ENCODE measurements at regions of chr5 and their contacts with region 1.

Region 1: GRCh38 chr5:170434966-170435605 is 45.9 kb upstream of the KCNMB1 start:
- DNase-seq: peak; percentile 78
- H3K27ac ChIP-seq: no peak overlapping the region
- CTCF ChIP-seq: peak; percentile 99

Region 2: DNA sequence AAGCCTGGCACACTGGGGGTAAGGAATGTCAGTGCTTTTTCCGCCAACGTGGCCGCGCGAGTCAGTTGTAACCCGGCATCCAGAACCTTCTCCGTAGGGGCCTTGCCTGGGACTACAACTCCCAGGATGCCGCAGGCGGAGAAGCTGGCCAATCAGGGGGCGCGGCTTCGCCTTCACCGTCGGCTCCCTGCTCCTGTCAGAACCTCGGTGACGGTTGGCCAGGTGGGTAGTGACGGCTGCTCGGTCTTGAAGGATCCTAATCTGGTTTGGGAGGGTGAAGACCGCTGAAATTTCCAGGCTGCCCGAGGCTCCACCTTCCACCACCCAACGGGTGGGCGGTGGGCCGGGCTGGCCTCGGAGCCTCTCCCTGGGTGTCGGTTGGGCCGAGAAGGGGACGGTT is 202.3 kb before region 1 on chr5 and contains the start of gene C5orf58:
- CTCF ChIA-PET with region 1: no interaction called
- POLR2A ChIA-PET with region 1: no interaction called
- DNase-seq: no peak
- H3K27ac ChIP-seq: no peak within 1 kb of the TSS
- CTCF ChIP-seq: no peak

Region 3: DNA sequence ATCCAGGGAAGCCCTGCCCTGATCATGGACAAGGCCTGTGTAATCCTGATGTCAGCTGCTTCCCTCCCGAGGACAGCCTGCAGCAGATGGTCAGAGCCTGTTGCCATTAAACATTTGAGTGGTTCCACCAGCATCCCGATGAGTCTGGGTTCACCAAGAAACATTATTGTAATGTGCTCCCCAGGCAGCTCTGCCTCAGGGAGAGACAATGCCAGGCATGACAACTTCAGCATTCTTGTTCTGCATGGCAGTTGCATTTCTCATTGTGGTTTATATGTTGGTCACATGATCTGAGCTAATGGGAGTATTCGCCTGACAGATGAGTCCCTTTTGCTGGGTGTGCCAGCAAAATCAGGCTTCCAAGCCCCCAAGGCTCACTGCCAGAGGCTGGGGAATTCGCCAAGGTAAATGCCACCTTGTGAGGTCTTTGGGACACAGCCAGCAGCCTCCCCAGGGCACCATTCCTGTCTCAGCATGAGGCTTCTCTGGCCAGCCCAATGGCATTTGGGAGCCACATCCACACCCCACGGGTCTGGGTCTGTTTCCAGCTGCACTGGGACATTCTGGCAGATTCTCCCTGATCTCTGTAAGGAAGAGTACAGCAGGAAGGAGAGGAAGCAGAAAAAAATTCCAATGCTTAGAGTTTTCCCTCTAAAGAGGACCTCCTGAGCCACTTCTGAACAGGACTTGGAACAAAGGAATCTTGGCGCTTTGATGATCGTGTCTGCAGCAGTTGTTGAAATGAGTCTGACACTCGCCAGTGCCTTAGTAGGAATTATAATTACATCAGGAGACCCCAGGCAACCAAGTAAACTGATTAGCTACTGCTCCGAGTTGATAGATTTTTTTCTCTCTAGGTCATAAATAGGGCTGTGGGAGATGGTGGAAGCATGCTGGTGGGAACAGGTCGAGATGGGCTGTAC is 87.4 kb after region 1 on chr5:
- CTCF ChIA-PET with region 1: no interaction called
- POLR2A ChIA-PET with region 1: no interaction called
- DNase-seq: peak; percentile 76
- H3K27ac ChIP-seq: peak overlapping the region; percentile 96
- CTCF ChIP-seq: no peak

Region 4: GRCh38 chr5:170623576-170624181 is 188.6 kb after region 1 on chr5:
- CTCF ChIA-PET with region 1: interaction called, 62 read pairs
- POLR2A ChIA-PET with region 1: no interaction called
- DNase-seq: peak; percentile 45
- H3K27ac ChIP-seq: no peak overlapping the region
- CTCF ChIP-seq: no peak; the same call in 1 of the 2 replicates

Region 5: DNA sequence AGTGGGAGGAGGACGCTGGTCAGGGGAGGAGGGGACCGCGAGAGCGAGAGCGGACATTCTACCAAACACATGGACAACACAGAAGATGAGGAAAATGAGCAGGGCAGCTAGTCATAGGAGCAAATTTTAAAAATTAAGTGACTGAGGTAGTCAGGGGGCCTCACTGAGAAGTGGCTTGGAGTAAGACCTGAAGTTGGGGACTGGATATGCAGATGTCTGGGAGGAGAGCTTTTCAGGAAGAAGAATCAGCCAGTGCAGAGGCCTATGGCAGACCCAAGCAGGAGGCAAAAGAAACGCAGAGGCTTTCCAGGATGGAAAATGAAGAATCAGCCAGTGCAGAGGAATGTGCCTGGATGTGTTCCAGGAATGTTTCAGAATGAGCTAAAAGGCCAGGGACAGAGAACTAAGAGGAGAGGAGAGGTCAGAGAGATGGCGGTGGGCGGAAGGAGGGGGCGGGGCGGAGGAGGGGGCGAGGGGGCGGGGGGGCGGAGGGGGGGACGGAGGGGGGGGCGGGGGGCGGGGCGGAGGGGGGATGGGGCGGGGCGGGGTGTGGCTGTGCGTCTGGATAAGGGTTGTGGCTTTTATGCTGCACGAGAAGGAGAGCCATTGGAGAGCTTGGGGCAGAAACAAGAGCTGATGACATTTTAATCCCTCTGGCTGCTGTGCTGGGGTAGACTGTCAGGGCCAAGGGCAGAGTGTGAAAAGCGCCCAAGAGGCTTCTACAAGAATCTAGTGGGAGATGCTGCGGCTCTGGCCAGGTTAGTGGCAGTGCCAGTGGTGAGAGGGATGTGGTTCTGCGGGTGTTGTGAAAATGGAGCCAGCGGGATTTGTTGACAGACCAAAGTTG is 198.4 kb after region 1 on chr5:
- CTCF ChIA-PET with region 1: interaction called, 92 read pairs
- POLR2A ChIA-PET with region 1: no interaction called
- DNase-seq: peak; percentile 69
- H3K27ac ChIP-seq: peak overlapping the region; percentile 72
- CTCF ChIP-seq: peak; percentile 3

Region 6: GRCh38 chr5:170638454-170639220 is 203.6 kb after region 1 on chr5:
- CTCF ChIA-PET with region 1: interaction called, 92 read pairs
- POLR2A ChIA-PET with region 1: no interaction called
- DNase-seq: peak; percentile 87
- H3K27ac ChIP-seq: no peak overlapping the region
- CTCF ChIP-seq: peak; percentile 91